ENCODE measurements at regions of chr9 and their contacts with region 1.

Region 1: GRCh38 chr9:129333953-129334724 is 156.1 kb upstream of the IER5L start:
- DNase-seq: peak; percentile 82
- H3K4me3 ChIP-seq: peak overlapping the region in 2 of 4 donors; percentile 10 to 19
- H3K27ac ChIP-seq: peak overlapping the region; percentile 79 to 88 (median 84)
- H3K4me1 ChIP-seq: peaks cover 26 to 42% (median 36%) of the 10 kb centered on the region in 4 donors
- H3K27me3 ChIP-seq: peaks cover 14% of the 10 kb centered on the region
- CTCF ChIP-seq: no peak
- EP300 ChIP-seq: peak; percentile 78
- POLR2A ChIP-seq: no peak

Region 2: GRCh38 chr9:129270903-129271431 is 63.2 kb before region 1 on chr9:
- in situ Hi-C with region 1: no loop called
- intact Hi-C with region 1: no loop called
- DNase-seq: peak; percentile 28
- H3K4me3 ChIP-seq: no peak overlapping the region
- H3K27ac ChIP-seq: peak overlapping the region in 3 of 4 donors; percentile 19 to 41 (median 33)
- H3K4me1 ChIP-seq: peaks cover 0 to 8% (median 0%) of the 10 kb centered on the region in 4 donors
- H3K27me3 ChIP-seq: peaks cover 5% of the 10 kb centered on the region
- CTCF ChIP-seq: no peak
- EP300 ChIP-seq: no peak
- POLR2A ChIP-seq: no peak

Region 3: DNA sequence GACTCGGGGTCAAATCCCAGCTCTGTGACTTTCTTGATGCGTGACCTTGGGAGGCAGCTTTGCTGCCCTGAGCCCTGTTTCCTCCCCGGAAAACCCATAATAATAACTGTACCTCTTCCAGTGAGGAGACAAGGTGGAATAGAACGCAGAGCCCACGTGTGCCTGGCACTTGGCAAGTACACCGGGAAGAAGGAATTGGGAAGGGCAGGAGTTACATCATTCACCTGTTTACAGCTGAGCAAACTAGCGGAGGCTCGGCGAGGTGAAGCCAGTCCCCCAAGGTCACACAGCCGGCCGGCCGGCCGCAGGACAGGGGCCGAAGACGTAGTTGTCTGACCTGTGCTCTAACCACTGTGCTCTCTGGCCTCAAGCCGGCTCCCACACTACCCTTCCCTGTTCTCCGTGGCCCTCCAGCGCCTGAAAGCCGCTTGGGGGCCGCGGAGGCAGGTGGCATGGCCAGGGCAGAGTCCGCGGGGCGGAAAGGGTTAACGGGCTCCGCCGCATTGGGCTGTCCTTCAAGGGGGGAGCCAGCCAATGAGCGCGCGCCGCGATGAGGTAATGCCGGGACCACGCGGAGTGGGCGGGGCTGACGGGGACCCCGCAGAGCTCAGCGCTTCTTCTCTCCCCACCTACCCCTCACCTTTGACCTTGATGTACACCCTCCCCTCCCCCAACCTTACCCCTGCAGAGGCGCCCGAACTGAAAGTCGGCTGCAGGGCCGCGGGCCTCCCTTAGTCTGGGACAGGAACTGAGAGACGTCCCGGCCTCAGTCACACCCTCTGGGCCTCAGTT is 161.6 kb after region 1 on chr9:
- in situ Hi-C with region 1: no loop called
- intact Hi-C with region 1: loop called (anchors 10 kb)
- DNase-seq: peak; percentile 94
- H3K4me3 ChIP-seq: peak overlapping the region; percentile 48 to 53 (median 51)
- H3K27ac ChIP-seq: peak overlapping the region; percentile 92 to 99 (median 96)
- H3K4me1 ChIP-seq: peaks cover 17 to 73% (median 59%) of the 10 kb centered on the region in 4 donors
- H3K27me3 ChIP-seq: no peaks in the 10 kb centered on the region
- CTCF ChIP-seq: peak in 1 of 5 experiments; percentile 10
- EP300 ChIP-seq: peak; percentile 4
- POLR2A ChIP-seq: peak; percentile 83

Measured in transverse colon (tissue), 4 donors.